ENCODE measurements at regions of chr19 and their contacts with region 1.

Region 1: GRCh38 chr19:36198119-36198518 is 16.3 kb downstream of the ZNF565 start:
- DNase-seq: no peak
- H3K4me3 ChIP-seq: no peak overlapping the region
- H3K27ac ChIP-seq: no peak overlapping the region
- H3K4me1 ChIP-seq: no peaks in the 10 kb centered on the region
- H3K27me3 ChIP-seq: no peaks in the 10 kb centered on the region
- CTCF ChIP-seq: no peak
- EP300 ChIP-seq: no peak
- POLR2A ChIP-seq: no peak

Region 2: DNA sequence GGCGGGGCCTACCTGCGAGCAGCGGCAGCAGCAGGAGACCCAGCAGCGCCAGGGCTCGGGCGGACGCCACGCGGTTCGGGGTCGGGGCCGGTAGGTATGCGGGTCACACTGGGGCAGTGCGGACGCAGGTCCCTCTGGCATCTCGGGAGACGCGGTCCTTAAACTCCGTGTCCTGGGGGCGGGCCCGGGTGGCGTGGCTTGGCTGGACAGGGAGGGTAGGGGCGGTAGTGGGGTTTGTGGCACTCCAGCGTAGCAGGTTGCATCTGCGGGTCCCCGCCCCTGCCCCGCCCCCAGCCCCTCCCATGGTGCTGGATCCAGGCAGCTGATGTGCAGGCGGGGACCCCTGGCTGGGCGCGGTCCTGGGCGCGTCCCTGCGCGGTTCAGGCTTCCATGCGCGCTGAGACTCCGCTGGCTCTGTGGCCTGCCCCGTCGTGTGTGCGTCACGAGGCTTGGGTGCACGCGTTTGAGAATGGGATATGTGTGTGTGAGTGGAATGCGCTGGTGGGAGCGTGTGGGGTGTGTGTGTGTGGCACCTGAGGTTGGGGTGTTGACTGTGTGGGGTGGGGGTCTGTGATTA is 1620.5 kb before region 1 on chr19:
- intact Hi-C with region 1: loop called in 1 of 4 experiments (anchors 5 kb)
- DNase-seq: peak in 1 of 5 donors; percentile 4
- H3K4me3 ChIP-seq: no peak overlapping the region
- H3K27ac ChIP-seq: no peak overlapping the region
- H3K4me1 ChIP-seq: no peaks in the 10 kb centered on the region
- H3K27me3 ChIP-seq: no peaks in the 10 kb centered on the region
- CTCF ChIP-seq: no peak
- EP300 ChIP-seq: no peak
- POLR2A ChIP-seq: no peak

Region 3: GRCh38 chr19:36113894-36114762 is 84.0 kb before region 1 on chr19:
- intact Hi-C with region 1: no loop called
- DNase-seq: peak; percentile 50 to 69 (median 54)
- H3K4me3 ChIP-seq: peak overlapping the region; percentile 64
- H3K27ac ChIP-seq: peak overlapping the region; percentile 65 to 82
- H3K4me1 ChIP-seq: peaks cover 12% of the 10 kb centered on the region
- H3K27me3 ChIP-seq: no peaks in the 10 kb centered on the region
- CTCF ChIP-seq: peak in 1 of 3 donors; percentile 10
- EP300 ChIP-seq: no peak
- POLR2A ChIP-seq: no peak

Region 4: GRCh38 chr19:36257520-36257876 is 59.4 kb after region 1 on chr19:
- intact Hi-C with region 1: no loop called
- DNase-seq: peak in 1 of 5 donors; percentile 49
- H3K4me3 ChIP-seq: no peak overlapping the region
- H3K27ac ChIP-seq: no peak overlapping the region
- H3K4me1 ChIP-seq: no peaks in the 10 kb centered on the region
- H3K27me3 ChIP-seq: no peaks in the 10 kb centered on the region
- CTCF ChIP-seq: no peak
- EP300 ChIP-seq: no peak
- POLR2A ChIP-seq: no peak